Thyroid gland (tissue), 4 donors: ENCODE measurements at regions of chr5 and their contacts with region 1.

Region 1: GRCh38 chr5:75681125-75681830 is 36.0 kb downstream of the POC5 start:
- DNase-seq: no peak
- H3K4me3 ChIP-seq: no peak overlapping the region
- H3K27ac ChIP-seq: peak overlapping the region in 1 of 3 donors; percentile 45
- H3K4me1 ChIP-seq: peaks cover 0 to 4% of the 10 kb centered on the region in 2 donors
- H3K27me3 ChIP-seq: no peaks in the 10 kb centered on the region
- CTCF ChIP-seq: peak; percentile 36 to 84 (median 76)
- POLR2A ChIP-seq: no peak

Region 2: GRCh38 chr5:75236322-75237316 is 444.7 kb before region 1 on chr5 and contains the start of gene ANKRD31:
- intact Hi-C with region 1: loop called (anchors 5 kb)
- DNase-seq: peak; percentile 84 to 86
- H3K4me3 ChIP-seq: peak within 1 kb of the TSS; percentile 13 to 65 (median 46)
- H3K27ac ChIP-seq: peak within 1 kb of the TSS; percentile 50 to 82 (median 67)
- H3K4me1 ChIP-seq: peaks cover 5 to 6% of the 10 kb centered on the region in 2 donors
- H3K27me3 ChIP-seq: no peaks in the 10 kb centered on the region
- CTCF ChIP-seq: peak; percentile 43 to 98 (median 92)
- POLR2A ChIP-seq: peak in 1 of 2 donors; percentile 77
- total RNA-seq, gene ANKRD31: 0.11 to 0.81 (median 0.33) TPM

Region 3: GRCh38 chr5:75336625-75337339 is 344.5 kb before region 1 on chr5 and contains the start of gene HMGCR:
- intact Hi-C with region 1: loop called (anchors 10 kb)
- DNase-seq: peak; percentile 99 to 100
- H3K4me3 ChIP-seq: peak within 1 kb of the TSS; percentile 76 to 99 (median 84)
- H3K27ac ChIP-seq: peak within 1 kb of the TSS; percentile 90 to 96 (median 96)
- H3K4me1 ChIP-seq: peaks cover 10 to 18% of the 10 kb centered on the region in 2 donors
- H3K27me3 ChIP-seq: no peaks in the 10 kb centered on the region
- CTCF ChIP-seq: peak in 3 of 6 experiments; percentile 4 to 27 (median 25)
- POLR2A ChIP-seq: peak; percentile 41 to 98
- total RNA-seq, gene HMGCR: 30.2 to 56.2 (median 42.5) TPM